Activated CD4-positive, alpha-beta memory T cell treated with anti-CD3 and anti-CD28 coated beads for 36 hours (primary cell): ENCODE measurements at regions of chr15 and their contacts with region 1.

Region 1: DNA sequence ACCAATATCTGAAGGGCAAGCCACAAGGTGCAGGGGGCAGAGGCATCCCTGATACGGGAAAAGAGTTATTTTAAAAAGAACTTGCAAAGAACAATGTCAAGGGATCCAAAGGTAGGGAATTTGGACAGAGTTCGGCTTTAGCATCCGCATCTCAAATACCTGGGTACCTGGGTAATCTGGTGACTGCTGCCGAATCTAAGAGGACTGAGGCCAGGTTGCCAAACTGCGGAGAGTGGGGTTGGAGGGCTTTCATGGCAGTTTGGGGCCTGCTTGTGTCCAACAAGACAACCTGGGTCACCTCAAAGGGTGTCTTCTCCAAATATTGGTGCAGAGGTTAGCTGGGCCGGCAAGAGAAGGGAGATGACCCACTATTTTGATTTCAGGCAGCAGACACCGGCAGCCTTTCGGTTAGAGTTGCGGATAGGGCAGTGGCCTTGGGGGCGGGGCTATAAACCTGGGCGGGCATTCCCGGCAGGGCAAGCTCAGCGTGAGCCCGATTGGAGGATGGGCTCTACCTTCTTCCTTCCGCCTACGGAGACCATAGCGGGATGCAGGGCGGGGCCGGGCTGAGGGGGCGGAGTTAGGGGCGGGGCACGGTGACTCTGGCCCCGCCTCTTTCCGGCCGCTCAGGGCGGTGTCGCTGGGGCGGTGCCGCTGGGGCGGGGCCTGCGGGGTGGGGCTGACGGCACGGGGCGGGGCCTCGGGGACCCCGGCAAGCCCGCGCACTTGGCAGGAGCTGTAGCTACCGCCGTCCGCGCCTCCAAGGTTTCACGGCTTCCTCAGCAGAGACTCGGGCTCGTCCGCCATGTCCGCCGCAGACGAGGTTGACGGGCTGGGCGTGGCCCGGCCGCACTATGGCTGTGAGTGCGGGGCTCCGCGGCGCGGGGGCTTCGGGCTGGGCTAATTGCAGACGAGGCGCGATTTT is at the start of gene IQGAP1:
- DNase-seq: peak; percentile 98
- H3K4me3 Mint-ChIP-seq: peak within 1 kb of the TSS; percentile 92
- H3K27ac Mint-ChIP-seq: peak within 1 kb of the TSS; percentile 91
- H3K4me1 Mint-ChIP-seq: peaks cover 46% of the 10 kb centered on the region
- H3K27me3 Mint-ChIP-seq: no peaks in the 10 kb centered on the region
- total RNA-seq, gene IQGAP1: 186 to 207 TPM

Region 2: GRCh38 chr15:90352109-90352893 is 35.5 kb before region 1 on chr15 and contains the start of gene ZNF774:
- CTCF ChIA-PET with region 1: interaction called, 4 read pairs
- POLR2A ChIA-PET with region 1: interaction called, 4 read pairs
- intact Hi-C with region 1: loop called (anchors 5 kb)
- DNase-seq: peak; percentile 93
- H3K4me3 Mint-ChIP-seq: peak within 1 kb of the TSS; percentile 87
- H3K27ac Mint-ChIP-seq: no peak within 1 kb of the TSS
- H3K4me1 Mint-ChIP-seq: peaks cover 6% of the 10 kb centered on the region
- H3K27me3 Mint-ChIP-seq: peaks cover 4% of the 10 kb centered on the region
- total RNA-seq, gene ZNF774: 0.68 to 1.1 TPM

Region 3: GRCh38 chr15:90376789-90377188 is 11.0 kb before region 1 on chr15:
- CTCF ChIA-PET with region 1: interaction called, 3 read pairs
- POLR2A ChIA-PET with region 1: interaction called, 16 read pairs
- intact Hi-C with region 1: no loop called
- DNase-seq: peak; percentile 78
- H3K4me3 Mint-ChIP-seq: peak overlapping the region; percentile 42
- H3K27ac Mint-ChIP-seq: peak overlapping the region; percentile 91
- H3K4me1 Mint-ChIP-seq: peaks cover 34% of the 10 kb centered on the region
- H3K27me3 Mint-ChIP-seq: no peaks in the 10 kb centered on the region

Region 4: DNA sequence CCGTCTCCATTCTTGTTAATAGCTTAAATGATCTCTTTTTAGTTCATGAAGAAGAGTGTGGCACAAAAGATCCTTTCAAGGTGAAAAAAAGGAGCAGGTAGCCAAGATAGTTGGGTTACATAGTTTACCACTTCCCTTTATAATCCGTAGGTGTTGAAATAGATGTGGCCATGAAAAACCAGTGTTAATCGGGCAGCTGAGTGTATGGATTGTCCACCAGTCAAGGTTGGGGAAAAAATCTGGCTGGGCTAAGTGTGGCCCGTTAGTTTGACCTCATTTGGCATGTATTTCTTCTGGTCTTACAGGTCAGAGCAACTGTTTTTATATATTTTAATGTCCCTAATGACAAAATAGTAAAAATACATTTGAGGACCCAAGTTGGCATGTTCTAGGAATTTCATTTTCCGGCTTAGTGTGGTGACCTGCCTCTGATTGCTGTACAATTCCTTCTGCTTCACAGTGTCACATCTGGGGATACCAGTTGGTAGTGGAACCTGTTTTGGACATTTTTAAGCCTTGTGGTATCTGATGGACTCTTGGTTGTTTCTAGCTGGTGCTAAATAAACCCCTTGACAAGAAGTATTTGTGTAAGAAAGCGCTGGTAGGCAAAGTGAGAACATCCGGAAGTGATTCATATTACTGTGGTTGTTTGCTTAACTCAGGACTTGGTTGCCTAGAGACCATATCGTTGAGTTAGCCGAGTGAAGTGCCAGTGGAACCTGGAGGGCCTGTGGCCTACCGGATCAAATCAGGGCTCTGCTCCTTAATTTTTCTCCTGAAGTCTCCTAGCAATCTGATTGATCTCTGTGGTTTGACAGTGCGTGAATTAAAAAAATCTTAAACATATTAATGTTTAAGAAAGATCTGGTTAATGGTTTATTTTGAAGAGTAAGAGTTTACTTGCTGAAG is 12.9 kb after region 1 on chr15:
- CTCF ChIA-PET with region 1: interaction called, 6 read pairs
- POLR2A ChIA-PET with region 1: interaction called, 28 read pairs
- intact Hi-C with region 1: loop called (anchors 1 kb)
- DNase-seq: peak; percentile 72
- H3K4me3 Mint-ChIP-seq: peak overlapping the region; percentile 57
- H3K27ac Mint-ChIP-seq: peak overlapping the region; percentile 91
- H3K4me1 Mint-ChIP-seq: peaks cover 66% of the 10 kb centered on the region
- H3K27me3 Mint-ChIP-seq: no peaks in the 10 kb centered on the region

Region 5: DNA sequence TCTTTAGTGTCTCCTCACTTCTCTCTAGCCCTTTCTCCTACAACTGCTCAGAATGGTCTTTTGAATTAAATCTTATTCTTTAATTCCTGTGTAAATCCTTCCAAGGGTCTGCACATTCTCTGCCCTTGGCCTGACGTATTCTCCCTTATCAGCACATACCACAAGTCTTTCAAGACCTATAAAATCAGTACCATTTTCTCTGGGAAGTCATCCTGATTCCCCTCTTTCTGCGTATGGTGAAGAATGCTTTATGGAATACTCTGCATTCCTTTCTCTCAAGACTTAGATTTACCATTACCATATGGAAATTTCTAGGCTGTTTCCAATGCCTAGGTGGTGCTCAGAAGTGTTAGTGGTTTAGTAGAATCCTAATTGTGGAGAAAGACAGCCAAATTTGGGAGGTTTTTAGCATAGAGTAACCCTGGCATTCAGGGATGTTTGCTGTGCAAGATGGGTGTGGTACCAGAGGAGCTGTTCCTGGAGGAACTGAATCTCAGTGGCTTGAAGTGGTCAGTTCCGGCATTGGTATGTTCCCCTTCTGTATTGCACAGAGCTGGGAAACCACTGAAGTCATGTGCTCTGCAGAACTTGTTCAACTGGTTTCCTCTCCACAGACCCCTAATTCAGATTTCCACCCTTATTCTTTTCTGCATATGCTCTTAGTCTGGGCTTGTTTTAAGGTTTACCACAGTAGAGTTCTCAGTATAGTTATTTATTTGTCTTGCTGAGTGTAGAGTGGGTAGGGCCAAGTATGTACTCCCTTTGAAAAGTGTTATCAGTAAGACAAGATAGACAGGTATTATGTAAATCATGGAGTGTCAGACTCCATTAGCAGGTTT is 24.8 kb after region 1 on chr15:
- CTCF ChIA-PET with region 1: interaction called, 4 read pairs
- POLR2A ChIA-PET with region 1: interaction called, 18 read pairs
- intact Hi-C with region 1: no loop called
- DNase-seq: no peak
- H3K4me3 Mint-ChIP-seq: no peak overlapping the region
- H3K27ac Mint-ChIP-seq: peak overlapping the region; percentile 23
- H3K4me1 Mint-ChIP-seq: peaks cover 79% of the 10 kb centered on the region
- H3K27me3 Mint-ChIP-seq: no peaks in the 10 kb centered on the region